CD4-positive, alpha-beta memory T cell (primary cell): ENCODE measurements at regions of chr13 and their contacts with region 1.

Region 1: GRCh38 chr13:77176350-77176749 is 149.4 kb upstream of the FBXL3 start:
- DNase-seq: no peak
- H3K4me3 ChIP-seq: no peak overlapping the region
- H3K4me3 Mint-ChIP-seq: no peak overlapping the region
- H3K27ac ChIP-seq: no peak overlapping the region
- H3K27ac Mint-ChIP-seq: no peak overlapping the region
- H3K4me1 ChIP-seq: no peaks in the 10 kb centered on the region
- H3K4me1 Mint-ChIP-seq: peaks cover 3 to 9% (median 6%) of the 10 kb centered on the region in 4 donors
- H3K27me3 ChIP-seq: no peaks in the 10 kb centered on the region
- H3K27me3 Mint-ChIP-seq: no peaks in the 10 kb centered on the region

Region 2: GRCh38 chr13:77136902-77137420 is 39.4 kb before region 1 on chr13:
- CTCF ChIA-PET with region 1: no interaction called
- POLR2A ChIA-PET with region 1: no interaction called
- intact Hi-C with region 1: loop called (anchors 5 kb)
- DNase-seq: no peak
- H3K4me3 ChIP-seq: no peak overlapping the region
- H3K4me3 Mint-ChIP-seq: no peak overlapping the region
- H3K27ac ChIP-seq: no peak overlapping the region
- H3K27ac Mint-ChIP-seq: peak overlapping the region in 2 of 7 donors; percentile 39 to 69
- H3K4me1 ChIP-seq: no peaks in the 10 kb centered on the region
- H3K4me1 Mint-ChIP-seq: peaks cover 0 to 9% (median 5%) of the 10 kb centered on the region in 4 donors
- H3K27me3 ChIP-seq: no peaks in the 10 kb centered on the region
- H3K27me3 Mint-ChIP-seq: no peaks in the 10 kb centered on the region

Region 3: DNA sequence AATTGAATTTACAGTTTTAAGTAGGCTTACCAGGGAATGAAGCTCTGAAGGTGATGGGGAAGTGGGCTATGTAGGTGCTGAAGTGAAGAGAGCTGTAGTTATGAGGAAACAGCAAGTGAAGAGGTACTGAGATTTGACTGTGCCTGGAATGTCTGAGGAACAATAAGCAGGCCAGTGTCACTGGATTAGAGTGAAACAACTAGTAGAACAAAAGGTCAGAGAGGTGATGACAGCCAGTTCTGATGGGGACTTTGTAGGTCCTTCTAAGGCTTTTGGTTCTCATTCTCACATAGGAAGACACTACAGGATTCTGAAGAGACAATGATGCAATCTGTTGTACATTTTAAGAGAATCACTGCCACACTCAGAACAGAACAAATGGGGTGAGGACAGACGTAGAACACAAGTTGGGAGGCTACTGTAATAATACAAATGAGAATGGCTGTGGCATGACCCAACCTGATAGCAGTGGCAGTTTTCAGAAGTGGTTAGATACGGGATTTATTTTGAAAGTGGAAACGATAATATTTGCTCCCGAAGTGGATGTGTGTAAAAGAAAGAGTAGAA is 19.8 kb after region 1 on chr13:
- CTCF ChIA-PET with region 1: no interaction called
- POLR2A ChIA-PET with region 1: no interaction called
- intact Hi-C with region 1: no loop called
- DNase-seq: no peak
- H3K4me3 ChIP-seq: no peak overlapping the region
- H3K4me3 Mint-ChIP-seq: no peak overlapping the region
- H3K27ac ChIP-seq: no peak overlapping the region
- H3K27ac Mint-ChIP-seq: no peak overlapping the region
- H3K4me1 ChIP-seq: peaks cover 5% of the 10 kb centered on the region
- H3K4me1 Mint-ChIP-seq: peaks cover 3 to 10% (median 5%) of the 10 kb centered on the region in 4 donors
- H3K27me3 ChIP-seq: no peaks in the 10 kb centered on the region
- H3K27me3 Mint-ChIP-seq: no peaks in the 10 kb centered on the region